OCI-LY7 (cell line): ENCODE measurements at regions of chrX and their contacts with region 1.

Region 1: GRCh38 chrX:65595460-65595876 is 60.9 kb upstream of the LAS1L start:
- DNase-seq: peak; percentile 91
- H3K4me3 ChIP-seq: no peak overlapping the region
- H3K27ac ChIP-seq: no peak overlapping the region
- H3K4me1 ChIP-seq: peaks cover 9% of the 10 kb centered on the region
- CTCF ChIP-seq: peak; percentile 93

Region 2: GRCh38 chrX:65667503-65668376 is 72.3 kb after region 1 on chrX and contains the start of gene MSN:
- CTCF ChIA-PET with region 1: interaction called, 3 read pairs
- POLR2A ChIA-PET with region 1: no interaction called
- intact Hi-C with region 1: loop called (anchors 5 kb)
- DNase-seq: peak; percentile 67
- H3K4me3 ChIP-seq: peak within 1 kb of the TSS; percentile 84
- H3K27ac ChIP-seq: peak within 1 kb of the TSS; percentile 71
- H3K4me1 ChIP-seq: peaks cover 40% of the 10 kb centered on the region
- CTCF ChIP-seq: peak; percentile 47
- total RNA-seq, gene MSN: 95.1 and 95.8 TPM in 2 replicates

Region 3: GRCh38 chrX:65697915-65698796 is 102.7 kb after region 1 on chrX:
- CTCF ChIA-PET with region 1: interaction called, 4 read pairs
- POLR2A ChIA-PET with region 1: no interaction called
- intact Hi-C with region 1: loop called (anchors 2 kb)
- DNase-seq: peak; percentile 87
- H3K4me3 ChIP-seq: peak overlapping the region; percentile 58
- H3K27ac ChIP-seq: peak overlapping the region; percentile 100
- H3K4me1 ChIP-seq: peaks cover 90% of the 10 kb centered on the region
- CTCF ChIP-seq: no peak

Region 4: GRCh38 chrX:65706041-65706828 is 110.8 kb after region 1 on chrX:
- CTCF ChIA-PET with region 1: no interaction called
- POLR2A ChIA-PET with region 1: interaction called, 4 read pairs
- intact Hi-C with region 1: loop called (anchors 1 kb)
- DNase-seq: no peak
- H3K4me3 ChIP-seq: no peak overlapping the region
- H3K27ac ChIP-seq: peak overlapping the region; percentile 11
- H3K4me1 ChIP-seq: peaks cover 49% of the 10 kb centered on the region
- CTCF ChIP-seq: no peak

Region 5: GRCh38 chrX:65985922-65986588 is 390.6 kb after region 1 on chrX:
- CTCF ChIA-PET with region 1: interaction called, 3 read pairs
- POLR2A ChIA-PET with region 1: no interaction called
- intact Hi-C with region 1: loop called (anchors 5 kb)
- DNase-seq: peak; percentile 67
- H3K4me3 ChIP-seq: no peak overlapping the region
- H3K27ac ChIP-seq: no peak overlapping the region
- H3K4me1 ChIP-seq: peaks cover 6% of the 10 kb centered on the region
- CTCF ChIP-seq: peak; percentile 76